Endothelial cell of umbilical vein (primary cell): ENCODE measurements at regions of chr17 and their contacts with region 1.

Region 1: GRCh38 chr17:42193969-42194899 is at the start of gene GHDC:
- DNase-seq: peak; percentile 77
- H3K4me3 ChIP-seq: peak within 1 kb of the TSS; percentile 22 to 52 (median 46)
- H3K27ac ChIP-seq: no peak within 1 kb of the TSS
- H3K4me1 ChIP-seq: no peaks in the 10 kb centered on the region
- H3K27me3 ChIP-seq: no peaks in the 10 kb centered on the region
- CTCF ChIP-seq: no peak
- POLR2A ChIP-seq: peak; percentile 57
- total RNA-seq, gene GHDC: 9.8 TPM in 2 replicates

Region 2: GRCh38 chr17:42153919-42154742 is 40.1 kb before region 1 on chr17:
- CTCF ChIA-PET with region 1: no interaction called
- POLR2A ChIA-PET with region 1: no interaction called
- dilution Hi-C with region 1: no loop called
- intact Hi-C with region 1: loop called (anchors 1 kb)
- DNase-seq: peak; percentile 73
- H3K4me3 ChIP-seq: peak overlapping the region; percentile 73 to 100 (median 90)
- H3K27ac ChIP-seq: peak overlapping the region; percentile 75
- H3K4me1 ChIP-seq: peaks cover 13% of the 10 kb centered on the region
- H3K27me3 ChIP-seq: no peaks in the 10 kb centered on the region
- CTCF ChIP-seq: no peak
- POLR2A ChIP-seq: peak; percentile 53

Region 3: DNA sequence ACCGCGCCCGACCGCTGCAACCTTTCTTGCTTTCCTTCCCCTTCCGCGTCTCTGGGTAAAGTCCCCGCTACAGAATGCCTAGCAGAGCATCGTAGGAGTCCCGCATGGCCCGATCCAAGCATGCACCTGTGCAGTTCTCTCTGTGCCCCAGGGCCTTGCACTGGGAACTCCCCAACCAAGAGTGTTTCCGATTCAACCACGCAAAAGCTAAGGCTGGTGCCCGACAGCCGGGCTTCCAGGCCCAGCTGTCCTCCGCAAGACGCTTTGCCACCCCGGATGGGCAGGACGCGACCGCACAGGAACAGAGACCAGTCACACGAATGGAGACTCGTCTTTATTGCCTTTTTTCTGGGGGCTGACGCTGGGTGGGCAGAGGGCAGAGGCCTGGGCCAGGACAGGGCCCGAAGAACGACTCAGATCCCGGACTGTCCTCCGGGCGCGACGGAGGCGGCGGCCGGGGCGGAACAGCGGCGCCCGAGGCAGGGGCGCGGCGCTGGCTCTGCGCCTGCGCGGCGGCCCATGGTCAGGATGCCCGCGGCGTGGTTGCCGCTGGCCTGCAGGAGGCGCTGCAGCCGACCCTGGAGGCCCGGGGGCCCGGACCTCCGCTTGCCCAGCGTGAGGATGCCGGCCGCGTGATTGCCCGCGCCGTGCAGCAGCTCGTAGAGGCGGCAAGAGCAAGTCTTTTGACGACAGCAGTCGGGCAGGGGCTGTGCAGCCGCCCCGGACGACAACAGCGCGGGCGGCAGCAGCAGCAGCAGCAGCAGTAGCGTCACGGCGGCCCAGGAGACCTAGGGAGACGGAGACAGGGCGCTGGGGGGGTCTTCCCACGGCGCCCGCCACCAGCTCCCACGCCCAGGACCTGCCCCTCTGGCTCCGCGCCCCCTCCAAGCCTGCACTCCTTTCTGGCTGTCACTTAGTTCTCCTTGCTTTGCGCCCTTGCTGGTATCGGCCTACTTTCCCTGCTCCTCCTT is 10.2 kb before region 1 on chr17:
- CTCF ChIA-PET with region 1: interaction called, 14 read pairs
- POLR2A ChIA-PET with region 1: no interaction called
- dilution Hi-C with region 1: no loop called
- intact Hi-C with region 1: no loop called
- DNase-seq: peak; percentile 70
- H3K4me3 ChIP-seq: peak overlapping the region; percentile 35 to 51 (median 45)
- H3K27ac ChIP-seq: peak overlapping the region; percentile 16
- H3K4me1 ChIP-seq: peaks cover 14% of the 10 kb centered on the region
- H3K27me3 ChIP-seq: peaks cover 9 to 13% of the 10 kb centered on the region in 2 experiments
- CTCF ChIP-seq: peak; percentile 86 to 99
- POLR2A ChIP-seq: peak; percentile 38

Region 4: DNA sequence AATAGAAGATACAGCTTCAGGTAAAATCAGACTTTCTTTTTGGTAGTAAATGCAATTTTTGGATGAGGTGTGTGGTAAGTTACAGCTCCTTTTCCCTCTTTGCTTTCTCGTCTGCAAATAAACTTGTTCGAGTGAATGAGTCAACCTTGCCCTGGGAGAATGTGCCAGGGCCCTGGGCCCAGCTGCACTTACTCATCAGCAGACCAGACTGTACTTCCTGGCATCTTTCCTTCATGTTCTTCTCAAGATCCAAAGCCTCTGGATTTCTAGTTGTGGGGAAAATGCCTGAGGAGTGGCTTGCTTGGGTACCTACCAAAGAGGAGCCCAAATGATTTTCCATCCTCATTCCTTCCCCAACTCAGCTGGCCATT is 700.9 kb after region 1 on chr17:
- CTCF ChIA-PET with region 1: no interaction called
- POLR2A ChIA-PET with region 1: no interaction called
- dilution Hi-C with region 1: no loop called
- intact Hi-C with region 1: no loop called
- DNase-seq: peak; percentile 88
- H3K4me3 ChIP-seq: no peak overlapping the region
- H3K27ac ChIP-seq: peak overlapping the region; percentile 81
- H3K4me1 ChIP-seq: peaks cover 25% of the 10 kb centered on the region
- H3K27me3 ChIP-seq: no peaks in the 10 kb centered on the region
- CTCF ChIP-seq: no peak
- POLR2A ChIP-seq: no peak